Natural killer cell (primary cell): ENCODE measurements at regions of chr11 and their contacts with region 1.

Region 1: DNA sequence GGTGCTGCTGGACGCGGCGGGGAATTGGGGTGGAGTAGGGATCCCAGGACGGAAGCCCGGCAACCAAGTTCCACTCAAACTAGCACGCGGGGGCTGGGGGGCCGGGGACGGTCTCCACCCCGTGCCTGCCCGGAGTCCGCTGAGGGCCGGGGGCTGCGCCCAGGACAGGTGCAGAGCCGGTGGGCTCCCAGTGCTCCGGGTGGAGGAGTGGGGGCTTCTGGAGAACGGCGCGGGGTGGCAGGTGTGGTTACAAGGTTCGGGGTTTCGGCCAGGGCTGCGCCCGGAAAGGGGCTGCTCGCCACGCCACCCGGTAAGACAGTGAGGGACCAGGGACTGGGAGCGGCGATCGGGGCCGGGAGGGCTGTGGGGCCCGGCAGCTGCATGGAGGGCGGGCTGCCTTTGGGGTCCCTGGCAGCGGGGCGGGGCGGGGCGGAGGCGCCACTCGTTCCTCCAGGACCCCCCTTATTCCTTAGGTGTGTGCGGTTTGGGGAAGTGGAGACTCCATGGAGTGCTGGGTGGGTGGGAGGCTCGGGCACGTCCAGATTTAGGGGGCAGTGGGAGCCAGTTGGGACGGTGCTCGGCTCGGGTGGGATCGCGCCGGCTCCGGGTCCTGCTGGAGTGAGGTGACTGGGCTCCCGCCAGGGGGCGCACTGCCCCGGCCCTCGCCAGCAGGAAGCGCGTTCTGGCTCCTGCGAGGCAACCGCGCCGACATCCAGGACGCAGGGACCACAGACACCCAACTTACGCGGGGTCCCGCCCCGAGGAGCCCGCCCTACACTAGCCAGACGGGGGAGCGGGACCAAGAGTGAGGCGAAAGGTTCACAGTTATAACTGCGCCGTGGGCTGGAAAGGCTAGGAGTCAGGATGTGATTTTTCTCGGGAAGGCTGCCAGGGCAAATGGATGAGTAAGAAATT is 868 bp downstream of the TSPAN18 start:
- DNase-seq: peak; percentile 69 to 91
- ATAC-seq: peak; percentile 80 to 87 (median 82)
- H3K4me3 ChIP-seq: peak overlapping the region; percentile 58
- H3K4me3 Mint-ChIP-seq: peak overlapping the region; percentile 81
- H3K27ac ChIP-seq: no peak overlapping the region
- H3K27ac Mint-ChIP-seq: peak overlapping the region in 1 of 2 donors; percentile 47
- H3K4me1 ChIP-seq: peaks cover 25% of the 10 kb centered on the region
- H3K4me1 Mint-ChIP-seq: peaks cover 5 to 15% of the 10 kb centered on the region in 2 donors
- H3K27me3 ChIP-seq: peaks cover 11% of the 10 kb centered on the region
- H3K27me3 Mint-ChIP-seq: peaks cover 39 to 46% of the 10 kb centered on the region in 2 donors
- CTCF ChIP-seq: peak; percentile 91

Region 2: DNA sequence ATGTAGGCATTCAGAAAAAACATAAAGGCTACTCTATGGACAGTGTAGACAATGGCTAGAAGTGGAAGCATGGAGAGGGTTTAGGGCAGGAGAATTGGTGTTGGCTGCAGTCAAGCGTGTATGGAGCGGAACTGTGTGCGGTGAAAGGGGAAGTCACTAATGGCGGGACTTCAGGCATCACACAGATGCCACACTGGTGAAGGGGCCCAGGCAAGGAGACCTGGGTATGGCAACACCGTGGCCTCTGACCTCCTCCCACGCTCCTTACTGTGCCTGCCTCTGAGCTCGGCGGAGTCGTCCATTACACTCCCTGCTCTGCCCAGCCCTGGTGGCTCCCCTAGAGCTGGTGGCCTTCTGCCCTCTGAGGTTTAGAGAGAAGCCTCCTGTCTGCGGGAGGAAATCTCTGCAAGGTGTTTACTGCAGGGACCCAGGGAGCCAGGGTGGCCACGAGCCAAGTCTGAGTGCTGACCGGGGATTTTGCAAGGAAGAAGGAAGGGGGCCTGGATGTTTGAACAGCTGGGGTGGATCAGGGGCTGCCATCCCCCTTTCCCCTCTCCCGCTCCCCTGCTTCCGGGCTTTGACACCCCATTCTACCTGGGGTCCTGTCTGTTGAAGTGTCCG is 76.0 kb before region 1 on chr11:
- intact Hi-C with region 1: no loop called
- DNase-seq: no peak
- ATAC-seq: no peak
- H3K4me3 ChIP-seq: no peak overlapping the region
- H3K4me3 Mint-ChIP-seq: no peak overlapping the region
- H3K27ac ChIP-seq: no peak overlapping the region
- H3K27ac Mint-ChIP-seq: no peak overlapping the region
- H3K4me1 ChIP-seq: no peaks in the 10 kb centered on the region
- H3K4me1 Mint-ChIP-seq: no peaks in the 10 kb centered on the region
- H3K27me3 ChIP-seq: peaks cover 2% of the 10 kb centered on the region
- H3K27me3 Mint-ChIP-seq: peaks cover 31 to 43% of the 10 kb centered on the region in 2 donors
- CTCF ChIP-seq: no peak

Region 3: DNA sequence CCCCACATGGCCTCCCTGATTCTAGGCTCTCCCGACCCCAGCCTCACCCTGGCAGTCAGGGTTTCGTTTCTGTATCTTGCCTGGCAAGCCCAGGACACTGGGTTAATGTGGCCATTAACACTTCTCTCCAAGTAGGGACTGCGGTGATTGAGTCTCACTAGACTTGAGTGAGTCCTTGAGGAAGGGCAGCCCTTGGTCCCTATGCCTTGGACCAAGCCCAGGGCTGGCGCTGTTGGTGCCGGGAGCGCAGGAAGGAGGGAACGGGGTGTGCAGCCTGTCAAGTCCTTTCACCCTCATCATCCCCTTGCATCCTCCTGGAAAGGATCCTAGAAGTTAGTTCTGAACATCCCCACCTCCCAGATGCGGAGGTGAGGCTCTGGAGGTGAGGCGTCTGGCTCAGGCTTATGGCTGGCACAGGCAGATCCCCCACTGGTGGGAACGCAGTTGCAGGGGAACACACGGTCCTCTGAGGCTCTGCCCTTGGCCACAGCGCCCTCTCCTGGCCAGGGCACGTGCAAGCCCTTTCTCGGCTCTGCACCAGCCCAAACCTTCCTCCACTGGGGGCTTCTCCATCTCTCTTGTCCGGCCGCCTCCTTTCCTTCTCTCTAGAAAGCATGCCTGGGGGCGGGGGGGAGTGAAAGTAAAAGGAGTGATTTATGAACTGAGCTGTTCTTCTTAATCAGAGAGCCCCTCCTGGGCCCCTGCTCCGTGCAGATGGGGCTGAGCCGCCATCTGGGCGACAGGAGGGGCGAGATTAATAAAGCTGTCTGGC is 166.4 kb after region 1 on chr11:
- intact Hi-C with region 1: loop called (anchors 1 kb)
- DNase-seq: peak; percentile 47 to 76
- ATAC-seq: peak; percentile 59 to 87 (median 80)
- H3K4me3 ChIP-seq: no peak overlapping the region
- H3K4me3 Mint-ChIP-seq: no peak overlapping the region
- H3K27ac ChIP-seq: no peak overlapping the region
- H3K27ac Mint-ChIP-seq: no peak overlapping the region
- H3K4me1 ChIP-seq: no peaks in the 10 kb centered on the region
- H3K4me1 Mint-ChIP-seq: no peaks in the 10 kb centered on the region
- H3K27me3 ChIP-seq: peaks cover 2% of the 10 kb centered on the region
- H3K27me3 Mint-ChIP-seq: peaks cover 10 to 20% of the 10 kb centered on the region in 2 donors
- CTCF ChIP-seq: peak; percentile 68